IMR-90 (cell line): ENCODE measurements at regions of chr11 and their contacts with region 1.

Region 1: GRCh38 chr11:6377902-6378639 is 12.2 kb upstream of the SMPD1 start:
- DNase-seq: no peak
- ATAC-seq: peak; percentile 39; the same call in 1 of the 2 replicates
- H3K4me3 ChIP-seq: no peak overlapping the region
- H3K27ac ChIP-seq: no peak overlapping the region
- H3K4me1 ChIP-seq: no peaks in the 10 kb centered on the region
- H3K27me3 ChIP-seq: peaks cover 2% of the 10 kb centered on the region
- CTCF ChIP-seq: no peak
- POLR2A ChIP-seq: no peak
- RAD21 ChIP-seq: no peak

Region 2: GRCh38 chr11:5910540-5910939 is 467.5 kb before region 1 on chr11:
- CTCF ChIA-PET with region 1: no interaction called
- POLR2A ChIA-PET with region 1: no interaction called
- dilution Hi-C with region 1: no loop called
- in situ Hi-C with region 1: no loop called
- intact Hi-C with region 1: no loop called
- DNase-seq: no peak
- ATAC-seq: no peak
- H3K4me3 ChIP-seq: no peak overlapping the region
- H3K27ac ChIP-seq: no peak overlapping the region
- H3K4me1 ChIP-seq: no peaks in the 10 kb centered on the region
- H3K27me3 ChIP-seq: no peaks in the 10 kb centered on the region
- CTCF ChIP-seq: no peak
- POLR2A ChIP-seq: no peak
- RAD21 ChIP-seq: no peak

Region 3: DNA sequence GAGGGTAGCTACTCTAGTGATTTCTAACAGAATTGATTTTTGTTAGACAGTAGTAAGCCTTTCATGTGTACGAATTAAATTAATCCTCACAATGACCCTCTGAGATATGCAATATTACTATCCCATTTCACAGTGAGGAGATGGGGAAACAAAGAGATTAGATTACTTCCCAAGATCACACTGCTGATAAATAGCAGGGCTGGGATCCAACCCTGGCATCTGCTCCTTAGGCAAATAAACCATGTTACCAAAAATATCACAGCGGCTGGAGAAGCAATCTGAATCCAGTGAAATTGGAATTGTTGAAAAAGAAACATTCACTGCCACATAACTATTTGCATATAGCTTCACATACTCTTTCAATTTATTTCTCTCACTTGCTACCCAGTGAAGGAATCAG is 45.0 kb before region 1 on chr11:
- CTCF ChIA-PET with region 1: no interaction called
- POLR2A ChIA-PET with region 1: no interaction called
- dilution Hi-C with region 1: no loop called
- in situ Hi-C with region 1: no loop called
- intact Hi-C with region 1: no loop called
- DNase-seq: peak; percentile 46
- ATAC-seq: peak; percentile 63
- H3K4me3 ChIP-seq: no peak overlapping the region
- H3K27ac ChIP-seq: no peak overlapping the region
- H3K4me1 ChIP-seq: no peaks in the 10 kb centered on the region; the same call in 1 of the 2 replicates
- H3K27me3 ChIP-seq: no peaks in the 10 kb centered on the region; the same call in 1 of the 2 replicates
- CTCF ChIP-seq: no peak
- POLR2A ChIP-seq: no peak
- RAD21 ChIP-seq: no peak

Region 4: DNA sequence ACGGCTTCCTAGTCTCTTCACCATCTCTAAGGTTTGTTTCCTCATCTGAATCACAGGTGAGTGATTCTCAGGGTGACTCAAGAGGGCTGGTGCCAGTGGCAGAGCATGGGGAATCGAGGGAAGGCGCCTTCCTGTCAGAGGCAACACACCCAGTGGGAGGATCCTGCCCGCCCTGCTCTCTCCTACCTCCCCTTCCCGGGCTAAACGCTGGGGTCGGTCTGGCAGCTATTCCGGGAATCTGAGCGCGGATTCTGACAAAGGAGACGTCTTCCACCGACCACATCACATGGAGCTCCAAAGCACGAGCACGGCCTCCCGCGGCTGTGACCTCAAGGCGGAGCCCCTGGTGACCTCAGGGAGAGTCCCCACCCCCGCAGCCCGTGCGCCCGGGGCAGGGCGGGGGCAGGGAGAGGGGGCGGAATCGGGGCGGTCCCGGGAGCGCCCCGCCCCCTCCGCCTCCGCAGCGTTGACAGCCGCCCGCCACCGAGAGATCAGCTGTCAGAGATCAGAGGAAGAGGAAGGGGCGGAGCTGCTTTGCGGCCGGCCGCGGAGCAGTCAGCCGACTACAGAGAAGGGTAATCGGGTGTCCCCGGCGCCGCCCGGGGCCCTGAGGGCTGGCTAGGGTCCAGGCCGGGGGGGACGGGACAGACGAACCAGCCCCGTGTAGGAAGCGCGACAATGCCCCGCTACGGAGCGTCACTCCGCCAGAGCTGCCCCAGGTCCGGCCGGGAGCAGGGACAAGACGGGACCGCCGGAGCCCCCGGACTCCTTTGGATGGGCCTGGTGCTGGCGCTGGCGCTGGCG is 12.1 kb after region 1 on chr11 and contains the start of gene SMPD1:
- CTCF ChIA-PET with region 1: interaction called, 15 read pairs
- POLR2A ChIA-PET with region 1: no interaction called
- dilution Hi-C with region 1: no loop called
- in situ Hi-C with region 1: no loop called
- intact Hi-C with region 1: no loop called
- DNase-seq: peak; percentile 80
- ATAC-seq: peak; percentile 95
- H3K4me3 ChIP-seq: peak within 1 kb of the TSS; percentile 90
- H3K27ac ChIP-seq: peak within 1 kb of the TSS; percentile 76
- H3K4me1 ChIP-seq: peaks cover 6% of the 10 kb centered on the region
- H3K27me3 ChIP-seq: no peaks in the 10 kb centered on the region
- CTCF ChIP-seq: no peak
- POLR2A ChIP-seq: peak; percentile 65; the same call in 1 of the 2 replicates
- RAD21 ChIP-seq: no peak
- total RNA-seq, gene SMPD1: 17.5 and 19.5 TPM in 2 replicates

Region 5: DNA sequence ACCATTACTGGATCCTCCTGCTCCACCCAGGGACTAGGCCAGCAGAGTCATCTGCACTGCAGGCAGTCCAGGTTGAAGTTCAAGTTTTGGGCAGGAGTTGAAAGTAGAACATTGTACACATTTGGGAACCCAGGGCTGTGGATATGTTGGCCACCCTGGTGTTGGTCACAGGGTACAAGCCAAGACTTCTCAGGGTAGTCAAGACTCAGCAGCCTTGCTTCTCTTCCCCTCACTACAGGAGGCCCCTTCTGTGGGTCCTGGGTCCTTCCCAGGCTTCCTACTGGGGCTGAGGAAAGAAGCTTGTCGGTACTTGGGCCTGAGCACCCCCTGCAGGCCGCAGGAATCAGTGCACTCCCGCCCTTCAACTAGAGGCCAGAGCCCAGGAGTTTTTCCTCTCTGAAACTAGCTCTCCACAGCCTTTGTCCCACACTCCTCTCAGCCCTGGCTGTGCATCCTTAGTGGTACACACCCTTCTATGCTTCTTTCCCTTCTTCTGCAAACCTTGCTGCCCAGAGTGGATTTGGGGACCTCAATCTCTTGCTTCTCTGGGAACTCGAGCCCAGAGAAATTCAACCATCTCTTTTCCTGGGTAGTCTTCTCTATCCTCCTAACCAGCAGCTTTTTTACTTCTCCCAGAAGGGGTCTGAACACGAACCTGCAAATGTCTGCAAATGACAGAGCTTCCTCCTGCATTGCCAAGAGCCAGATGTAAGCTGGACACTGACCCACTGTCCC is 65.4 kb after region 1 on chr11:
- CTCF ChIA-PET with region 1: interaction called, 107 read pairs
- POLR2A ChIA-PET with region 1: interaction called, 6 read pairs
- dilution Hi-C with region 1: no loop called
- in situ Hi-C with region 1: loop called (anchors 5 kb)
- intact Hi-C with region 1: loop called (anchors 1 kb)
- DNase-seq: peak; percentile 50
- ATAC-seq: peak; percentile 98
- H3K4me3 ChIP-seq: no peak overlapping the region
- H3K27ac ChIP-seq: no peak overlapping the region
- H3K4me1 ChIP-seq: no peaks in the 10 kb centered on the region
- H3K27me3 ChIP-seq: no peaks in the 10 kb centered on the region
- CTCF ChIP-seq: peak; percentile 79
- POLR2A ChIP-seq: no peak
- RAD21 ChIP-seq: peak; percentile 80

Region 6: GRCh38 chr11:6505577-6506240 is 127.6 kb after region 1 on chr11:
- CTCF ChIA-PET with region 1: interaction called, 16 read pairs
- POLR2A ChIA-PET with region 1: no interaction called
- dilution Hi-C with region 1: no loop called
- in situ Hi-C with region 1: no loop called
- intact Hi-C with region 1: loop called (anchors 1 kb)
- DNase-seq: peak; percentile 75
- ATAC-seq: peak; percentile 86
- H3K4me3 ChIP-seq: no peak overlapping the region
- H3K27ac ChIP-seq: no peak overlapping the region
- H3K4me1 ChIP-seq: no peaks in the 10 kb centered on the region
- H3K27me3 ChIP-seq: no peaks in the 10 kb centered on the region
- CTCF ChIP-seq: peak; percentile 67
- POLR2A ChIP-seq: no peak
- RAD21 ChIP-seq: peak; percentile 47

Region 7: GRCh38 chr11:6603287-6604080 is 225.4 kb after region 1 on chr11 and contains the starts of genes ILK and RRP8:
- CTCF ChIA-PET with region 1: no interaction called
- POLR2A ChIA-PET with region 1: no interaction called
- dilution Hi-C with region 1: no loop called
- in situ Hi-C with region 1: no loop called
- intact Hi-C with region 1: loop called (anchors 1 kb)
- DNase-seq: peak; percentile 86
- ATAC-seq: peak; percentile 80
- H3K4me3 ChIP-seq: peak within 1 kb of the TSS; percentile 90
- H3K27ac ChIP-seq: peak within 1 kb of the TSS; percentile 95
- H3K4me1 ChIP-seq: peaks cover 20% of the 10 kb centered on the region
- H3K27me3 ChIP-seq: no peaks in the 10 kb centered on the region
- CTCF ChIP-seq: peak; percentile 27
- POLR2A ChIP-seq: peak; percentile 30; the same call in 1 of the 2 replicates
- RAD21 ChIP-seq: peak; percentile 26
- total RNA-seq, gene ILK: 272 and 339 TPM in 2 replicates
- total RNA-seq, gene RRP8: 11.1 and 11.5 TPM in 2 replicates

Region 8: GRCh38 chr11:6705905-6706535 is 327.9 kb after region 1 on chr11:
- CTCF ChIA-PET with region 1: interaction called, 9 read pairs
- POLR2A ChIA-PET with region 1: no interaction called
- dilution Hi-C with region 1: no loop called
- in situ Hi-C with region 1: no loop called
- intact Hi-C with region 1: loop called (anchors 1 kb)
- DNase-seq: peak; percentile 63
- ATAC-seq: peak; percentile 93
- H3K4me3 ChIP-seq: no peak overlapping the region
- H3K27ac ChIP-seq: no peak overlapping the region
- H3K4me1 ChIP-seq: no peaks in the 10 kb centered on the region
- H3K27me3 ChIP-seq: 0 out of 2 replicates have a peak, but pooled peaks cover 2% of the 10 kb centered on the region
- CTCF ChIP-seq: peak; percentile 89
- POLR2A ChIP-seq: no peak
- RAD21 ChIP-seq: peak; percentile 79